GM12878 (cell line): ENCODE measurements at regions of chr16 and their contacts with region 1.

Region 1: GRCh38 chr16:27154705-27155521 is 48.4 kb upstream of the KDM8 start:
- DNase-seq: no peak
- ATAC-seq: peak; percentile 94
- H3K4me3 ChIP-seq: no peak overlapping the region
- H3K27ac ChIP-seq: no peak overlapping the region
- H3K4me1 ChIP-seq: peaks cover 3% of the 10 kb centered on the region
- H3K27me3 ChIP-seq: no peaks in the 10 kb centered on the region
- CTCF ChIP-seq: peak; percentile 84 to 99 (median 99)
- EP300 ChIP-seq: no peak
- POLR2A ChIP-seq: no peak
- RAD21 ChIP-seq: peak; percentile 72

Region 2: GRCh38 chr16:27169511-27170071 is 14.7 kb after region 1 on chr16:
- CTCF ChIA-PET with region 1: interaction called, 19 read pairs
- POLR2A ChIA-PET with region 1: interaction called, 6 read pairs
- RAD21 ChIA-PET with region 1: interaction called, 4 read pairs
- SMC1A ChIA-PET with region 1: interaction called, 6 read pairs
- in situ Hi-C with region 1: no loop called
- intact Hi-C with region 1: no loop called
- DNase-seq: peak; percentile 13
- ATAC-seq: peak; percentile 84
- H3K4me3 ChIP-seq: no peak overlapping the region
- H3K27ac ChIP-seq: no peak overlapping the region
- H3K4me1 ChIP-seq: peaks cover 13% of the 10 kb centered on the region
- H3K27me3 ChIP-seq: 0 out of 4 replicates have a peak, but pooled peaks cover 0 to 2% of the 10 kb centered on the region in 2 experiments
- CTCF ChIP-seq: peak in 1 of 3 experiments; percentile 6; a peak in 2 of 6 replicates
- EP300 ChIP-seq: no peak
- POLR2A ChIP-seq: no peak
- RAD21 ChIP-seq: 0 out of 2 replicates have a peak, but pooled peaks have one; percentile 8

Region 3: GRCh38 chr16:27190316-27190871 is 35.5 kb after region 1 on chr16:
- CTCF ChIA-PET with region 1: no interaction called
- POLR2A ChIA-PET with region 1: no interaction called
- RAD21 ChIA-PET with region 1: no interaction called
- SMC1A ChIA-PET with region 1: no interaction called
- in situ Hi-C with region 1: no loop called
- intact Hi-C with region 1: no loop called
- DNase-seq: no peak
- ATAC-seq: no peak
- H3K4me3 ChIP-seq: no peak overlapping the region
- H3K27ac ChIP-seq: no peak overlapping the region
- H3K4me1 ChIP-seq: no peaks in the 10 kb centered on the region
- H3K27me3 ChIP-seq: no peaks in the 10 kb centered on the region
- CTCF ChIP-seq: no peak
- EP300 ChIP-seq: no peak
- POLR2A ChIP-seq: no peak
- RAD21 ChIP-seq: no peak

Region 4: GRCh38 chr16:27217256-27217655 is 62.3 kb after region 1 on chr16:
- CTCF ChIA-PET with region 1: no interaction called
- POLR2A ChIA-PET with region 1: no interaction called
- RAD21 ChIA-PET with region 1: no interaction called
- SMC1A ChIA-PET with region 1: no interaction called
- in situ Hi-C with region 1: no loop called
- intact Hi-C with region 1: no loop called
- DNase-seq: no peak
- ATAC-seq: no peak
- H3K4me3 ChIP-seq: no peak overlapping the region
- H3K27ac ChIP-seq: no peak overlapping the region
- H3K4me1 ChIP-seq: no peaks in the 10 kb centered on the region
- H3K27me3 ChIP-seq: no peaks in the 10 kb centered on the region
- CTCF ChIP-seq: no peak
- EP300 ChIP-seq: no peak
- POLR2A ChIP-seq: no peak
- RAD21 ChIP-seq: no peak

Region 5: DNA sequence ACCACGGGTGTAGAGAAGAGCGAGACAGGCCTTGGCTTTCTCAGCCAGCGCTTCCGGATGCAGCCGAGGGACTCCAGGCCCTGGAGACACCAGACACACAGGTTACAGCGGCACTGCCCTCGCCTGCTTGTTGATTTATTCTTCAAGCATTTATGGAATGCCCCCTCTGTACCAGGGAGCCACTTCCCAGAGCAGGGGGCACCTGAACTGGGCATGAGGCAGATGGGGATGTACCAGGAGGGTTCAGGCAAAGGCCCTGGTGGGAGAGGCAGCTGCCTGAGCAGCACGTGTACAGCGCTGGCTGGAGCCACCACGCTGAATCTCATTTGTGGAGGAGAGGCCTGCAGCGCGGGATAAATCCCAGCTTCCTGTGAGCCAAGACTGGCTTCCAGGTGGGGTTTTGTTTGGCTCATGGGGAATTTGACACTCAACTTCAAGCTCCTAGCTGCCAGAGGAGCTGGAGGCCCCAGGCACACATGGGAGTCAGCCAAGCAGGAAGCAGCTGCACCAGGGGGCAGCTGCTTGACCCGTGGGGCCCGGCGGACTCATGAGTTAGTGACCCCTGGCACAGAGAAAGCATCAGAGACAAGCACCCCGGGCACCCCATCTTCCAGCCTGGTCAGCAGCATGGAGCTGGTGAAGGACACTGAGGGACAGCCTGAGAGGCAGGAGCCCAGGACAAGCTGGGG is 306.7 kb after region 1 on chr16:
- CTCF ChIA-PET with region 1: interaction called, 5 read pairs
- POLR2A ChIA-PET with region 1: no interaction called
- RAD21 ChIA-PET with region 1: interaction called, 3 read pairs
- SMC1A ChIA-PET with region 1: interaction called, 3 read pairs
- in situ Hi-C with region 1: no loop called
- intact Hi-C with region 1: loop called (anchors 1 kb)
- DNase-seq: no peak
- ATAC-seq: no peak
- H3K4me3 ChIP-seq: no peak overlapping the region
- H3K27ac ChIP-seq: no peak overlapping the region
- H3K4me1 ChIP-seq: peaks cover 4% of the 10 kb centered on the region
- H3K27me3 ChIP-seq: no peaks in the 10 kb centered on the region
- CTCF ChIP-seq: no peak
- EP300 ChIP-seq: no peak
- POLR2A ChIP-seq: no peak
- RAD21 ChIP-seq: no peak